Activated naive CD4-positive, alpha-beta T cell treated with anti-CD3 and anti-CD28 coated beads for 36 hours (primary cell): ENCODE measurements at regions of chr6 and their contacts with region 1.

Region 1: DNA sequence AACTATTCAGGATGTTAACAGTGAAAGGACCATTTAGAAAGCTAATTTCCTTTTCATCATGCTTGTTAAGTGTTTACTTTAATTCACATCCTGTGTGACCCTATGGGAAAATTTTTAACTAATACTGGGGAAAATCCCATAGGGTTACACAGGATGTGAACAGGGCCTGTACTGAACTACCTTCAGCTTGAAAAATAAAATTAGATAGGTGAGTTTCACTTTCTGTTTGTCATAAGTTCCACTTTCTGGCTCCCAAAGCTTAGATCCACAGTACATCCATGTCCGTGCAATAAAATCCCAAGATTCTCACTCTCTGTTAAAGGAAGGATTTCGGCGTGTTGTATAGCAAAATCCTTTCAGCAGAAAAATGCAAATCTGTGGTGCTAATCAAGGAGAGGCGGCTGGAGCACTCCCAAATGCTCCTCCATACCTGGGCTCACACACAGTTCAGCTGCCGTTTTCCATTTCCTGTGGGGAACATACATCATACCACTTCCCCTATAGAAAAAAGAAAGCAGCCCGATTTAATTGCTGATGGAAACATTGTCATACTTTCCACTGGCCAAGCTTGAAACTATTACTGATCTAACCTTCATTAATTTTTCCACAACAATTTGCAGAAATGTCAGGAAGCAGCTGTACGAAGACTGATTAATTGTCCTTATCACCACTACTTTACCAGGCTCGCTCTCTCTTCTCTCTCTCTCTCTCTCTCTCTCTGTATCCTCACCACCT is 125.2 kb downstream of the HIVEP2 start:
- DNase-seq: peak; percentile 65
- H3K4me3 Mint-ChIP-seq: peak overlapping the region; percentile 79
- H3K27ac Mint-ChIP-seq: peak overlapping the region; percentile 94
- H3K4me1 Mint-ChIP-seq: peaks cover 83% of the 10 kb centered on the region
- H3K27me3 Mint-ChIP-seq: no peaks in the 10 kb centered on the region

Region 2: DNA sequence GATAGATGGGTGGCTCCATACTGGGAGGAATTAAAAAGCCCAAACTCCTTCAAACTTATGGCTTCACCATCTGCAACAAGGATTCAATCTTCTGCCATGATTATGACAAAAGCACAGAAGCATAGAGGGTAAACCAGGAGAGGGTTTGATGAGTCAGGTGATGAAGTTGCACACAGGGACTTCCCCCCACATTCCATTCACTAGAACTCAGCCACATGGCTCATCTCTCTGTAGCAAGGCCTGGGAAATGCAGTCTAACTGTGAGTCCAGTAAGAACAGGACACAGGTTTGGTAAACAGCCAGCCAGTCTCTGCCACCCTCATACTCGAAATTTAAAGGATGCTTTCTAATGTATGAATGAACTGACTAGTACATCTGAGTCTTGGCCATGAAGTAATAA is 17.6 kb before region 1 on chr6:
- CTCF ChIA-PET with region 1: interaction called, 8 read pairs
- intact Hi-C with region 1: loop called (anchors 1 kb)
- DNase-seq: peak; percentile 73
- H3K4me3 Mint-ChIP-seq: no peak overlapping the region
- H3K27ac Mint-ChIP-seq: peak overlapping the region; percentile 88
- H3K4me1 Mint-ChIP-seq: peaks cover 94% of the 10 kb centered on the region
- H3K27me3 Mint-ChIP-seq: no peaks in the 10 kb centered on the region

Region 3: DNA sequence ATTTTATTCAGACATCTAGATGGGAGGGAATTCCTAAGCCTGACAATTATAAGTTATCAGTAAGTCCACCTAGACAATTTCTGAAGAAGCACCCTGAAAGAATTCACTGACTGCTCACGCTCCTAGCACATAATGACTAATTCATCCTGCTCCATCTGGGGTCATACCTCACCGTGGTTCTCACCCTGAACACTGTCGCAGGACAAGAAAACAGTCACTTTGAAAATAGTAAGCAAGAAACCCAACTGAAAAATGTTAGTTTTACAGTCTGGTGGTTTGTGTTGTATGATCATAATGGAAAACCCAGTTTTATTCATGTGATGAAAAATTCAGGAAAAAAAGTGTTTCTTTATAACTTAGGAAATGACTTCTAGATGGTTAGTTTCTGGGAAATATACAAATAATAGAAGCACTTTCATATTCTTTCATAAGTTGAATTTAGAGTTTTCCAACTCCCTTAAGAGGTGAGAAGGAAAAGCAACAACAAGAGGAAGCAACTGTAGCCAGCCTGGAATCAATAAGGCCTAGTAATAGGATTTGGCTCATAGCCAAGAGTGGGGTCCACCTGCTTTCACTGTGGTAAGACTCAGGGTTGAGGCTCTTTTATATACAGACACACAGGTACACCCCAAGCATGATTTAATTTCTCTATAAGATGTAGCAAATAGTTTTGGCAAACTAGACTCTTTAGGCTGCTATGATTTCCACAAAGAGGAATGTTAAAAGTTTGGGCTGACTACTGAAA is 31.1 kb after region 1 on chr6:
- CTCF ChIA-PET with region 1: interaction called, 8 read pairs
- intact Hi-C with region 1: loop called (anchors 1 kb)
- DNase-seq: peak; percentile 62
- H3K4me3 Mint-ChIP-seq: peak overlapping the region; percentile 39
- H3K27ac Mint-ChIP-seq: peak overlapping the region; percentile 91
- H3K4me1 Mint-ChIP-seq: peaks cover 97% of the 10 kb centered on the region
- H3K27me3 Mint-ChIP-seq: no peaks in the 10 kb centered on the region

Region 4: GRCh38 chr6:142885182-142885867 is 65.6 kb after region 1 on chr6:
- CTCF ChIA-PET with region 1: interaction called, 6 read pairs
- intact Hi-C with region 1: loop called (anchors 1 kb)
- DNase-seq: peak; percentile 66
- H3K4me3 Mint-ChIP-seq: peak overlapping the region; percentile 90
- H3K27ac Mint-ChIP-seq: peak overlapping the region; percentile 99
- H3K4me1 Mint-ChIP-seq: peaks cover 87% of the 10 kb centered on the region
- H3K27me3 Mint-ChIP-seq: no peaks in the 10 kb centered on the region

Region 5: GRCh38 chr6:143136647-143137046 is 316.9 kb after region 1 on chr6:
- CTCF ChIA-PET with region 1: interaction called, 3 read pairs
- intact Hi-C with region 1: loop called (anchors 5 kb)
- DNase-seq: no peak
- H3K4me3 Mint-ChIP-seq: no peak overlapping the region
- H3K27ac Mint-ChIP-seq: peak overlapping the region; percentile 62
- H3K4me1 Mint-ChIP-seq: peaks cover 51% of the 10 kb centered on the region
- H3K27me3 Mint-ChIP-seq: no peaks in the 10 kb centered on the region